ENCODE measurements at regions of chr15 and their contacts with region 1.

Region 1: GRCh38 chr15:57527382-57528091 is 64.2 kb upstream of the MYZAP start:
- DNase-seq: peak; percentile 28 to 57
- H3K4me3 ChIP-seq: no peak overlapping the region
- H3K27ac ChIP-seq: no peak overlapping the region
- H3K4me1 ChIP-seq: no peaks in the 10 kb centered on the region
- H3K27me3 ChIP-seq: no peaks in the 10 kb centered on the region
- CTCF ChIP-seq: peak; percentile 77

Region 2: GRCh38 chr15:56821721-56822425 is 705.7 kb before region 1 on chr15:
- CTCF ChIA-PET with region 1: no interaction called
- POLR2A ChIA-PET with region 1: no interaction called
- intact Hi-C with region 1: loop called (anchors 5 kb)
- DNase-seq: peak; percentile 35 to 53
- H3K4me3 ChIP-seq: no peak overlapping the region
- H3K27ac ChIP-seq: no peak overlapping the region
- H3K4me1 ChIP-seq: peaks cover 8% of the 10 kb centered on the region; the same call in 1 of the 2 replicates
- H3K27me3 ChIP-seq: no peaks in the 10 kb centered on the region
- CTCF ChIP-seq: peak; percentile 74

Region 3: DNA sequence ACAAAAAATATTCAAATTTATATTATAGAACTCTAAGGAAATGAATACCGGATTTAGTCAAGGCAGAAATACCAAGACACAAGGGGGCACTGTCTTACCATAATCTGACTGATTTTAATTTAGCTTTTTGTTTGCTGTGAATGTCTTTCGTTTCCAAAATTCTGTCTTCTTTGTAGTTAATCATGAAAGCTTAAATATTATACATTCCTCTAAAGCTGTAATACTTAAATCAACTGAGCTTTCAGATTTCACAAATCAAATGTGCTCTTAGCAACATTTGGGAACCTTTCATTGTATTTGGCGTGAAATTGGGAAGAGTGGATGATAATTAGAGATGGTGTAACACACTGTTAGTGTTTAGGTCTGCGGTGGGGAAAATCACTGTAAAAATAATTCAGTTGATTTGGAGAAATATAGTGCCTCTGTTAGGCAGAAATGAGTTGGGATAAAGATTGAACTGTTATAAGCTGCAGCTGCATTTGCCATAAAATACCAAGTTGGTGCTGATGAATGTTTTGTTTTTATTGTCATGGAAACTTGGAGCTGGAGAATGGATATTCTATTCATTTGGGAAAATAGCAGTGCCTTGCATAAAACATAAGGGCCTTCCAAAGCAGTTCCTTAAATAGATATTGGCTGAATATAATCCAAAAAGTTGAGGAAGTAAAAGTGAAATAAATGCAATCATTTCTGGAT is 380.9 kb before region 1 on chr15:
- CTCF ChIA-PET with region 1: interaction called, 4 read pairs
- POLR2A ChIA-PET with region 1: no interaction called
- intact Hi-C with region 1: loop called (anchors 1 kb)
- DNase-seq: no peak
- H3K4me3 ChIP-seq: no peak overlapping the region
- H3K27ac ChIP-seq: no peak overlapping the region
- H3K4me1 ChIP-seq: no peaks in the 10 kb centered on the region
- H3K27me3 ChIP-seq: no peaks in the 10 kb centered on the region
- CTCF ChIP-seq: peak; percentile 70

Region 4: DNA sequence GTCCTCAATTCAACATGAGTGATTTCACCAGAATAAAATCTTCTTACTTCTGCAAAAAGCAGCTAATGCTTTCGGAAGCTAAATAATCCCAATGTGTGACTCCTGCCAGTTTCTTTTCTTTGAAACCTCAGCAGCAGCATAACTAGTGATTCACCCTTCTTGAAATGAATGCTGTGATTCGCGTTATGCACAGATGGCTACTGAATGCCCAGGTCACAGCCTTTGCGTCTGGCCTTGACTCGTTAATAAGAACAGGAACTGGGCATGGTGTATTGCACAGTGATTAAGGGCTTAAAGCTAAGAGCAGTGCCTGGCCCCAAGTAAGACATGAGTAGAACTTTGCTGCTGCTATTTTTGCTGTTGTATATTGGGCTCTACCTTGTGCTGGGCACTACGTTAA is 132.2 kb before region 1 on chr15:
- CTCF ChIA-PET with region 1: interaction called, 13 read pairs
- POLR2A ChIA-PET with region 1: no interaction called
- intact Hi-C with region 1: no loop called
- DNase-seq: no peak
- H3K4me3 ChIP-seq: no peak overlapping the region
- H3K27ac ChIP-seq: no peak overlapping the region
- H3K4me1 ChIP-seq: no peaks in the 10 kb centered on the region
- H3K27me3 ChIP-seq: no peaks in the 10 kb centered on the region
- CTCF ChIP-seq: no peak

Region 5: DNA sequence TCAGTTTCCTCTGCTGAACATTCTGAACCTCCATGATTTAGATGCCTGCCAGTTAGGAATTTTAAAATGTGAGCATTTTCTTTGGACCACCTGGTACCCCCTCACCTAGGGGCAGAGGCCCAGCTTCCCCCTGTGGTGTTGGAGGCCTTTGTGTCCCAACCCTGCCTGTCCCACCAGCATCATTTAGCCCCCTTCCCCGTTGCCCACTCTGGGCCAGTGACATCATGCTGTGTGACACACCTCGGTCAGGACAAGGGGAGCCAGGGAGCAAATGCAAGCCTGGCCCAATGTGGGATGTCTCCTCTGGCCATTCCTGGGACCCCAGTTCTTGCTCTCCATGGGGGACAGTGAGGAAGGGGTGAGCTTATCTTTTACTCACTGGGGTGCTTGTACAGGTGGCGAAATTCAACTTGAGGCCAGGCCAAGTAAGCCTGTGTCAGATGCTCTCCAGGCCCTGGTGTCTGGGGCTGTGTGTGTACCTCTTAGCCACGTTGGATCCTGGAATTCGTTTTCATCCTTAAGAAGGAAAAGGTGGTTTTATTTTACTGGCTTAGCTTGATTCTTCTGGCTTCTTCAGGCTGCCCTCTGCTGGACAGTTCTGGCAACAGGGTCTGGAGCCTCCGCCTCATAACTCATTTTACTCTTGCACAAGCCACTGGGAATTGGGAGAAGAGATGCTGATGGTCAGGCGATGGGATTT is 14.4 kb after region 1 on chr15:
- CTCF ChIA-PET with region 1: interaction called, 13 read pairs
- POLR2A ChIA-PET with region 1: no interaction called
- intact Hi-C with region 1: no loop called
- DNase-seq: peak in 1 of 2 experiments; percentile 70
- H3K4me3 ChIP-seq: no peak overlapping the region
- H3K27ac ChIP-seq: no peak overlapping the region
- H3K4me1 ChIP-seq: no peaks in the 10 kb centered on the region
- H3K27me3 ChIP-seq: no peaks in the 10 kb centered on the region
- CTCF ChIP-seq: peak; percentile 81

Region 6: GRCh38 chr15:57751177-57751800 is 223.8 kb after region 1 on chr15:
- CTCF ChIA-PET with region 1: no interaction called
- POLR2A ChIA-PET with region 1: no interaction called
- intact Hi-C with region 1: no loop called
- DNase-seq: no peak
- H3K4me3 ChIP-seq: no peak overlapping the region
- H3K27ac ChIP-seq: no peak overlapping the region
- H3K4me1 ChIP-seq: no peaks in the 10 kb centered on the region
- H3K27me3 ChIP-seq: no peaks in the 10 kb centered on the region
- CTCF ChIP-seq: peak; percentile 56

Region 7: DNA sequence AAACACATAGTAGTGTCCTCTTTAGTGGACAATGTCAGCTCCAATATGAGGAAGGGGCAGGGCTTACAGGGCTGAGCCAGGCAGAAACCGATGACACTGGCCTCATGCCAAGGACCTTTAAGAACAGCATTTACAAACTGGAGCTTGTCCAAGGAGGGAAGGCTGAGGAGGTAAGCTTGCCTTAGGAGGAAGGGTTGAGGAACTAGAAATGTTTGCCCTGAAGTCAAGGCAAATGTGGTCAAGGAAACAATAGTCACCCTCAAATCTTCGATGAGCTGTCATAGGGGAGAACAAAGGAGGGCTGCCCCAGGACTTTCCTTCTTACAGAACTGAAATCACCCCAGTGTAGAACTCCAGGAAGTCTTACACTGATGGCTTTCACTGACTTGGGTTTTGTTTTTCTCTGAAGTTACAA is 1040.6 kb after region 1 on chr15:
- CTCF ChIA-PET with region 1: no interaction called
- POLR2A ChIA-PET with region 1: no interaction called
- intact Hi-C with region 1: no loop called
- DNase-seq: peak; percentile 64
- H3K4me3 ChIP-seq: no peak overlapping the region
- H3K27ac ChIP-seq: peak overlapping the region; percentile 42
- H3K4me1 ChIP-seq: peaks cover 10% of the 10 kb centered on the region
- H3K27me3 ChIP-seq: no peaks in the 10 kb centered on the region
- CTCF ChIP-seq: no peak